Heart left ventricle (tissue), 16 donors: ENCODE measurements at regions of chr12 and their contacts with region 1.

Region 1: GRCh38 chr12:3299929-3300832 is 190.8 kb upstream of the PRMT8 start:
- DNase-seq: peak; percentile 89 to 93 (median 92)
- ATAC-seq: peak; percentile 55 to 81 (median 67)
- H3K4me3 ChIP-seq: peak overlapping the region in 4 of 12 donors; percentile 4 to 33 (median 16)
- H3K27ac ChIP-seq: peak overlapping the region in 6 of 12 donors; percentile 7 to 62 (median 40)
- H3K4me1 ChIP-seq: peaks cover 0 to 30% (median 26%) of the 10 kb centered on the region in 12 donors
- H3K27me3 ChIP-seq: no peaks in the 10 kb centered on the region
- CTCF ChIP-seq: peak; percentile 67 to 97 (median 96)
- POLR2A ChIP-seq: no peak

Region 2: GRCh38 chr12:3336606-3337311 is 36.6 kb after region 1 on chr12:
- intact Hi-C with region 1: loop called in 2 of 10 experiments (anchors 2 to 5 kb)
- DNase-seq: peak in 4 of 5 donors; percentile 56 to 78 (median 74)
- ATAC-seq: peak; percentile 66 to 86 (median 74)
- H3K4me3 ChIP-seq: no peak overlapping the region
- H3K27ac ChIP-seq: peak overlapping the region in 11 of 12 donors; percentile 19 to 74 (median 65)
- H3K4me1 ChIP-seq: peaks cover 3 to 44% (median 18%) of the 10 kb centered on the region in 12 donors
- H3K27me3 ChIP-seq: no peaks in the 10 kb centered on the region
- CTCF ChIP-seq: no peak
- POLR2A ChIP-seq: no peak

Region 3: DNA sequence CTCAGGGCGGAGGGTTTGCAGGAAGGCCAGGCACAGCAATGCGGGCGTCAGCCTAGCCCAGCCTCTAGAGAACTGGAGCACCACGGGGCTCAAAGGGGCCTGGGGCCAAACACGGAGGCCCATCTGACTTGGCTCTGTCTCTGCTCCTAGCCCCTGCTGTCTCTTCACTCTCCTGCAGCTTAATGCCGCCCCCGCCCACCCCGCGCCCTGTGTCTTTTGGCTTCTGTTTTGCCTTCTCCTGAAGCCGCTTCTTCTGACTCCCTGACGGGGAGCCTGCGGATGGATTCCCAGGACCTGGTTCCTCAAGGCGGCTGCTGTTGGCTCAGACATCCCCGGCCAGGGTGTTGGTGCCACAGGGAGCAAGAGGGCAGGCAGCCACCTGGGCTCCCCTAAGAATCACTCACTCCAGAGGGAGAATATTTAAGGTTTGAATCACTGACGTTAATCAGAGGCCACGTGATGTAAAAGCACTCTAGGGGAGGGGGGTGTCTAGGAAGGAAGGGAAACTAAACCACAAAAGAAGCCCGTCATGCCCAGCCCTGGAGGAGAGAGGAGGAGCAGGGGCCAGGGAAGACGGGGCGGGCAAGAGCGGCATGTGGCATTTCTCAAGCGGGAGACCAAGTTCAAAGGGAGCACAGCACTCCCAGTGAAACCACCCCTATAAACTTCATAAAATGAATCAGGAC is 154.0 kb after region 1 on chr12:
- intact Hi-C with region 1: loop called in 3 of 10 experiments (anchors 5 to 10 kb)
- DNase-seq: no peak
- ATAC-seq: no peak
- H3K4me3 ChIP-seq: no peak overlapping the region
- H3K27ac ChIP-seq: no peak overlapping the region
- H3K4me1 ChIP-seq: no peaks in the 10 kb centered on the region
- H3K27me3 ChIP-seq: peaks cover 0 to 8% (median 0%) of the 10 kb centered on the region in 9 donors
- CTCF ChIP-seq: no peak
- POLR2A ChIP-seq: no peak

Region 4: DNA sequence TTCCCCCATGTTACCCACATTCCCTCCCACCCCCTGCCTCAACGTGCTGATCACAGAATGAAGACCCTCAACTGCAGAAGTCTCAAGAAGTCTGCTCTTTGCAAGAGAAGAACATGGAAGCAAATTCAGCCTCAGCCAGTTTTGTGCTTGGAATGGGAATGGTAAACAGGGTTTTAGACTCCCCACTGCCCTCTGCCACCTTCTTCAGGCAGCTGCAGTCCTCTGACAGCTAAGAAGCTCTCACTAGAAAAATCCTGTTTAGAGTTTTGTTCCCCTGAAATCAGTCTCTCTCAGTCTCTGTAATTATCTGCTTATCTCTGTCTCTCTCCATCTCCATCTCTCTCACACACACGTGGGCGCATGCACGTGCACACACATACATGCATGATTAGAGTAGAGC is 367.3 kb after region 1 on chr12:
- intact Hi-C with region 1: loop called in 3 of 10 experiments (anchors 10 kb)
- DNase-seq: no peak
- ATAC-seq: no peak
- H3K4me3 ChIP-seq: no peak overlapping the region
- H3K27ac ChIP-seq: no peak overlapping the region
- H3K4me1 ChIP-seq: peaks cover 0 to 31% (median 4%) of the 10 kb centered on the region in 12 donors
- H3K27me3 ChIP-seq: no peaks in the 10 kb centered on the region
- CTCF ChIP-seq: no peak
- POLR2A ChIP-seq: no peak

Region 5: GRCh38 chr12:3777206-3777809 is 477.1 kb after region 1 on chr12:
- intact Hi-C with region 1: loop called (anchors 1 to 10 kb)
- DNase-seq: no peak
- ATAC-seq: peak; percentile 48 to 65 (median 62)
- H3K4me3 ChIP-seq: no peak overlapping the region
- H3K27ac ChIP-seq: no peak overlapping the region
- H3K4me1 ChIP-seq: peaks cover 0 to 14% (median 1%) of the 10 kb centered on the region in 12 donors
- H3K27me3 ChIP-seq: no peaks in the 10 kb centered on the region
- CTCF ChIP-seq: peak; percentile 48 to 79 (median 70)
- POLR2A ChIP-seq: no peak